ENCODE measurements at regions of chr19 and their contacts with region 1.

Region 1: DNA sequence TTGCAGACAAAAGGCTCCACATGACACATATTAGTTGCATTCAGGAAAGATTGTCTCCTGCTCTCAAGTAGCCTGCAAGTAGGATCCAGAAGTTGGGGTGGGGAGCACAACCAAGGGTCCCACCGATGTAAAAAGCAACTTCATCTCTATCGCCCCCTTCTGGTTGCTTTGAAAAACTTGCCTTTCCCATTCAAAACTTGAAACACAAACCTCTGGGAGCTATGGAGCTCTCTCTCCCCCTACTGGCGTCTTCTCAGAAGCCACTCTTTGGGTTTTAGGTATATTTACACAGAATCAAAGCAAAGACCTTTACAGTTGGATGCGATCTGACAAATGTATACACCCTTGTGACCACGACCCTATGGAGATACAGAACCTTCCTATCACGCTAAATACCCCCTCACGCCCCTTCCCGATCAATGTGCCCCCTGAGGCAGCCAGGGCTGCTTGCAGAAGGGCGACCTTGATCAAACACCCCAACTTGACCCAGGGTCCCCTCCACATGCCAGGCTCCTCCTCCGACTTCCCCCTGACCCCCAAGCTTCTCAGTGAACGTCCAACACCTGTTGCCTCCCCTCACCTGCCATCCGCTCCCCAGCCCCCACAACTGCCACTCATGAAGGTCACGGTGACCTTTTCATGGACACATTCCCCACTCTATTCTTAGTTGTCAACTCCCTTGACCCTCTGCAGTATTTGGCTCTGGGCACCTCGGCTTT is 10.1 kb downstream of the NOSIP start:
- DNase-seq: no peak
- H3K4me3 ChIP-seq: no peak overlapping the region
- H3K27me3 ChIP-seq: no peaks in the 10 kb centered on the region
- CTCF ChIP-seq: peak; percentile 99

Region 2: GRCh38 chr19:49473868-49474544 is 96.3 kb before region 1 on chr19 and contains the start of gene FLT3LG:
- CTCF ChIA-PET with region 1: interaction called, 16 read pairs
- POLR2A ChIA-PET with region 1: no interaction called
- DNase-seq: no peak
- H3K4me3 ChIP-seq: peak within 1 kb of the TSS; percentile 80
- H3K27me3 ChIP-seq: no peaks in the 10 kb centered on the region
- CTCF ChIP-seq: peak; percentile 98
- polyA plus RNA-seq, gene FLT3LG: 4.9 and 7.7 TPM in 2 replicates

Region 3: DNA sequence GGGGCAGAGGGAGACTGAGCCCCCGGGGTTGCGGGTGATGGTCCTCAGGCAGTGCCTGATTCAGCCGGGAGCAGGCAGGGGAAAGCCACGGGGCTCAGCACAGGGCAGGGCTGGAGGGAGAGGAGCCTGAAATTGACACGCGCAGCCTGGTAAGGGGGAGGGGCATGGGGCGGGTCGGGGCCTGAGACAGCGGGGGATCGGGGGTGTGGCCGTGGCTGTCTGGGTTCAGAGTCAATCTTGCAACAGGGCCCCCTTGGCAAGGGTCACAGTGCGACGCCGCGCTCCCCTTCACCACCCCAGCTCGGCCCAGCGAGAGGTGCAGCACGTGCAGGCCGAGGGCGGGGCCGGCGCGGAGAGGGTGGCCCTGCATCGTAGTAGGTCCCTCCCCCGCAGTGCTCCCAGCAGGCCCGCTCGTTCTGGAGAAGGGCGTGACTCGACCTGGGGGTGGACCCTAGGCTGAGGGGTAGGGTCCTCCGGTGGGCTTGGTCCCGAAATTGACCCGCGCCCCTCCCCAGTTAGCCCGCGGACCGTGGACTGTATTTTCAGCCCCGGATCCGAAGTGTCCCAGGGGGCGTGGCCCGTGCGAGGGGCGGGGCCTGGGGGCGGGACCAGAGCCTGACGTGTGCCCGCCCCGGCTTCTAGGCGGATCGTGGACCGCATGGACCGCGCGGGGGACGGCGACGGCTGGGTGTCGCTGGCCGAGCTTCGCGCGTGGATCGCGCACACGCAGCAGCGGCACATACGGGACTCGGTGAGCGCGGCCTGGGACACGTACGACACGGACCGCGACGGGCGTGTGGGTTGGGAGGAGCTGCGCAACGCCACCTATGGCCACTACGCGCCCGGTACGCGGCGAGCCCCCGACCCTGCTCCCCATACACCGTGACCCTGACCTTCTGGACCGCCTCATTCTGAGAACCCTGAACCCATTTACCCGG is 36.5 kb before region 1 on chr19:
- CTCF ChIA-PET with region 1: interaction called, 8 read pairs
- POLR2A ChIA-PET with region 1: interaction called, 10 read pairs
- DNase-seq: no peak
- H3K4me3 ChIP-seq: peak overlapping the region; percentile 49
- H3K27me3 ChIP-seq: no peaks in the 10 kb centered on the region
- CTCF ChIP-seq: peak; percentile 31

Region 4: DNA sequence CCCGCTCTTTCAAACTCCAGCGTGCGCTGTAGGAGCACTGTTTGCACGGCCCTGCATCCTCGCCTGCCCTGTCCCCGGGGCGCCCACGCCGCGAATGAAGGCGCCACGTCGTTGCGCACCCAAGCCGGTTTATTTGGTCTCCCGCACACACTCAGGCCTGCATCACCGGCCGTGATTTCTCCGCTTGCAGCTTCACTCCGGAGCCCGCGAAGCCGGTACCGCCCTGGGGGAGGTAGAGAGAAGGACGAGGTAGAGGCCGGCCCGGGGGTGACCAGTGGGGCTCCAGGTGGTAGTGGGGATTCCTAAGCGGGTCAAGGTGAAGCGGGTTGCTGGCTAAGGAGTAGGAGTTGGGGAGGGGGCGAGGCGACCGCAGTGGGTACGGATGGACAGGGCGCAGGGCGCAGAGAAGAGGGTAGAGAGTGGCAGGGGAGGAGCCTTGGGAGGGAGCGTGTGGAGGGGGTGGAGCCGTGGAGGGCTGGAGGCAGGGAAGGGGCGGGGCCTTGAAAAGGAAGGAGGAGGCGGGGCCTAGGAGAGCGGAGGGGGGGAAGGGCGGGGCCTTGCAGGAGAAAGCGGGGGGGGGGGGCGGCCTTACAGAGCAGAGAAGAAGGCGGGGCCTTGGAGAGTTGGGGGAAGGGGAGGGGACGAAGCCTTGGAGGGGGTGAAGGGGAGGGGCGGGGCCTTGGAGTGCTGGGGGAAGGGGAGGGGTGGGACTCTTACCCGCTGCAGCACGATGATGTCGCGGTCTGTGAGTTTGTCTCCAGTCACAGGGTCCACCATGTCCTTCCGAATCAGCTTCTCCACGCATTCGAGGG is 14.5 kb before region 1 on chr19:
- CTCF ChIA-PET with region 1: interaction called, 55 read pairs
- POLR2A ChIA-PET with region 1: no interaction called
- DNase-seq: no peak
- H3K4me3 ChIP-seq: no peak overlapping the region
- H3K27me3 ChIP-seq: no peaks in the 10 kb centered on the region
- CTCF ChIP-seq: no peak

Region 5: GRCh38 chr19:49676690-49677231 is 106.5 kb after region 1 on chr19:
- CTCF ChIA-PET with region 1: interaction called, 21 read pairs
- POLR2A ChIA-PET with region 1: no interaction called
- DNase-seq: peak; percentile 100
- H3K4me3 ChIP-seq: peak overlapping the region; percentile 93
- H3K27me3 ChIP-seq: no peaks in the 10 kb centered on the region
- CTCF ChIP-seq: no peak

Measured in BJ (cell line).